ENCODE measurements at regions of chr6 and their contacts with region 1.

Region 1: DNA sequence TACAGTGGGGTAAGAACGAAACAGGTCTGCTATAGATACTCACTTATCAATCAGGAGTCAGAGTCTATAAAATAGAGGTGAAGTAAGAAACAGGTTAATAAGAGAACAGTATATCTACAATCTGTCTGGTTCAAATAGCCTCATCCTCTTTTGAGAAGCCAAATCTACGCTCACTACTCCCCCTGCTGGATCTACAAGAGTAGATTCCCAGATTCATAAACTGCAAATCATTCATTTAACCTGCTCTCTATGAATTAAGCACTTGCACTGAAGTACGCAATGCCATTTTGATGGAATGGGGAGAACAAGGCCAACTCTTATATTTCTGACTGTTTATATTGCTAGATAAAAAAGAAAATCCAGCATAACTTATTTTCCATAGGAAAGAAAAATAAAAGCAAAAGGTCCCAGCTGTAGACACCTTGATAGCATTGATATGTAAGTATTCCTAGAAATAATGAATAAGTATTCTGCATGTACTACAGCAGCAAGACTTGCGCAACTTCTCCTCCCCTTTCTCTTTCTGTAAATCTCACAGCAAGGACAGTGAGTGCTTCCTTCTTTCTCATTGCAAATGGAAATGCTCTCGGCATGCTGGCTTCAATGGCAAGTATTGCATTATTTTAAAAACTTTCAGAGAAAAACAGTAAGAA is 92.3 kb downstream of the RFX6 start:
- DNase-seq: peak in 1 of 2 donors; percentile 5
- ATAC-seq: peak in 1 of 2 donors; percentile 53
- H3K4me3 ChIP-seq: no peak overlapping the region
- H3K27ac ChIP-seq: no peak overlapping the region
- H3K4me1 ChIP-seq: peaks cover 9 to 13% of the 10 kb centered on the region in 2 donors
- H3K27me3 ChIP-seq: no peaks in the 10 kb centered on the region
- CTCF ChIP-seq: peak; percentile 35 to 72 (median 44)
- POLR2A ChIP-seq: no peak

Region 2: DNA sequence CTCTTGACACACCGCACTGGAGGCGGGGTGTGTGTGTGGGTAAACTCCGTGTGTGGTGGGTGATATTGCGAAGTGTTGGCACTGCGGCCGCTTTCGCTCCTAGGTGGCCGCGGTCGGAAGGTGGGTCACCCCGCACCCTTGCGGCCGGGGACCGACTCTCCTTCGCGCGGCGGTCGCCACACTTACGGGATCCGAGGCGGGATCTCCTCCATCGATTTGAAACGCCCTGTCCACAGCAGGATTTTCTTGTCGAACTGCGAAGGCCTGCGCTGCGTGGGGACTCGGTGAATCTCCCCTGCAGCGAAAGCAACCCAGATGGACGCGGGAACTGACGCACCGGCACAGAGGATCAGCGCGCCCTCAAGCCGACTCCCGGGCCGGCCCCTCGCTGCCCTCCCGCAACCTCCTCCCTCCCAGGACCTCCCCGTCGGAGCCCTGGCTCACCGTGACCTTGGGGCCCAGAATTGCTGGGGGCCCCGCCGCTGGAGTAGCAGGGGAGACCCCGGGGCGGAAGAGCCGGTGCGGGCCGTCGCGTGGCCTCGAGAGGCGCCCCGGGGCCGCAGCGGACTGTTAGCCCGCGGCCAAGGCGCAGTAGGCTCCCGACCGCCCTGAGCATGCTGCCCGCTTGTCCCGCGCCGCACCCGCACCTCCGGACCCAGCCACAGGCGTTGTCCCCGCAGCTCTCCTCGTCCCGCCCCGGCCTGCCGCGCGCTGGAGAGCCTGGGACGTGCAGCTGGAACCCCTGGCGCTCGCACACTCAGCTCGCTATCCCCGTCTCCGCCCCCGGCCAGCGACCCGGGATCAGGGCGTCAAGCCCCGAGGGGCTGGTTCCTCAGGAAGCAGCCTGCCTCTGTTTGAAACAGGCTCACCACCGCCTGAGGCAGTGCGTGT is 204.1 kb before region 1 on chr6 and contains the start of gene FAM162B:
- in situ Hi-C with region 1: no loop called
- intact Hi-C with region 1: no loop called
- DNase-seq: peak in 1 of 2 donors; percentile 44
- ATAC-seq: peak; percentile 40 to 55
- H3K4me3 ChIP-seq: peak within 1 kb of the TSS; percentile 57 to 65 (median 62)
- H3K27ac ChIP-seq: peak within 1 kb of the TSS; percentile 64 to 76 (median 66)
- H3K4me1 ChIP-seq: peaks cover 0 to 3% of the 10 kb centered on the region in 2 donors
- H3K27me3 ChIP-seq: peaks cover 5 to 33% (median 31%) of the 10 kb centered on the region in 3 donors
- CTCF ChIP-seq: no peak
- POLR2A ChIP-seq: no peak
- total RNA-seq, gene FAM162B: 1.8 to 8.2 (median 3.6) TPM

Region 3: DNA sequence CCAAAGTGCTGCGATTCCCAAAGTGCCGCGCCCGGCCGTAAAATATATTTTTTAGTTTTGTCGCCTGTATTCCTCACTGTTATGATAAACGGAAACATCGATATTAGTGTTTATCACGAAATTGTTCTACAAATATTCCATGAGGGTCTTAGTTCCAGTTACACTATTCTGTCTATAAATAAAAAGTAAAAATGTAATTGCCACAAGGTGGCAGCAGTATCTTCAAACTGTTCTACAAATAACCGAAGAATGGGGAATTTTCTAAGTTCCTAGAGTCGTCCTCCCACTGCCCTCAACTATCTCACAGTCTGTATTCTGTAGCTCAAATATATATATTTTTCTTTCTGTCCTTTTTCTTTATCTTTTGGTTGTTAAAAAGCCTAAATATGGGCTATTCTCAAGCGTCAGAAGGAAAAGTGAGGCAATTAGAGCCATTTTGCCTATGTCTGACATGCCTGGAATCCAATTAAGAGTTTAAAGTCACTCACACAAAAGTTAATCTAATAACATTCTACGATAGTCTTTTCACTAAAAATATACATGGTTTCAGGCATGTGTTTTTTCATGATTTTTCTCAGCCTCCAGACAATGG is 189.7 kb before region 1 on chr6:
- in situ Hi-C with region 1: no loop called
- intact Hi-C with region 1: loop called (anchors 2 kb)
- DNase-seq: no peak
- ATAC-seq: no peak
- H3K4me3 ChIP-seq: peak overlapping the region in 3 of 4 donors; percentile 4 to 15 (median 4)
- H3K27ac ChIP-seq: no peak overlapping the region
- H3K4me1 ChIP-seq: no peaks in the 10 kb centered on the region
- H3K27me3 ChIP-seq: no peaks in the 10 kb centered on the region
- CTCF ChIP-seq: peak; percentile 4 to 46 (median 30)
- POLR2A ChIP-seq: no peak

Region 4: DNA sequence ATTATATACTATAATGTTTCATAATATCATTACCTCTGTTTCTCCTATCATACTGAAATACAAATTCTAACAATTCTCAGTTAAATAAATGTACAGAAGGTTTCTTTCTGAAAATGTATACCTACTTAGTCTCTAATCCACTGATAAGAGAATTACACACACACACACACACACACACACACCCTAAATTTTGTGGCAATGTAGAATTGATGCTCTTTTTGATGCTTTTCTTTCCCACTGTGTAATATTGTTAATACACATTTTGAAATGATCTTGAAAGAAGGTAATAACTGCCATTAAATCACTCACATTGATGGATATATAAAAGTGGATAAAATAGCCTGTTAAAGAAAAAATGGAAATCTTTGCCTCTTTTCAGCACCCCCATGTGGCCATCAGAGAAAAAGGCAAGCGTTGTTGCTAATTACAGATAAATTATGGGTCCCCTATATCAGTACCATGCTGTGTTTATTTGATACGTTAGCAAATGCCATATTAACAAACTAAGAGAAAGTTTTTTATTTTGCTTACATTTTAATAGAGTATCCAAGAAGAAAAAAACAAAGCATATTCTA is 219.4 kb after region 1 on chr6:
- in situ Hi-C with region 1: loop called in 1 of 4 experiments (anchors 25 kb)
- intact Hi-C with region 1: loop called (anchors 1 kb)
- DNase-seq: no peak
- ATAC-seq: peak in 1 of 2 donors; percentile 26
- H3K4me3 ChIP-seq: no peak overlapping the region
- H3K27ac ChIP-seq: no peak overlapping the region
- H3K4me1 ChIP-seq: no peaks in the 10 kb centered on the region
- H3K27me3 ChIP-seq: no peaks in the 10 kb centered on the region
- CTCF ChIP-seq: peak in 4 of 5 experiments; percentile 49 to 58 (median 54)
- POLR2A ChIP-seq: no peak

Region 5: GRCh38 chr6:117326396-117326795 is 357.1 kb after region 1 on chr6:
- in situ Hi-C with region 1: loop called in 2 of 4 experiments (anchors 10 to 25 kb)
- intact Hi-C with region 1: no loop called
- DNase-seq: no peak
- ATAC-seq: no peak
- H3K4me3 ChIP-seq: no peak overlapping the region
- H3K27ac ChIP-seq: peak overlapping the region in 1 of 4 donors; percentile 27
- H3K4me1 ChIP-seq: peaks cover 19 to 26% of the 10 kb centered on the region in 2 donors
- H3K27me3 ChIP-seq: no peaks in the 10 kb centered on the region
- CTCF ChIP-seq: no peak
- POLR2A ChIP-seq: no peak

Region 6: DNA sequence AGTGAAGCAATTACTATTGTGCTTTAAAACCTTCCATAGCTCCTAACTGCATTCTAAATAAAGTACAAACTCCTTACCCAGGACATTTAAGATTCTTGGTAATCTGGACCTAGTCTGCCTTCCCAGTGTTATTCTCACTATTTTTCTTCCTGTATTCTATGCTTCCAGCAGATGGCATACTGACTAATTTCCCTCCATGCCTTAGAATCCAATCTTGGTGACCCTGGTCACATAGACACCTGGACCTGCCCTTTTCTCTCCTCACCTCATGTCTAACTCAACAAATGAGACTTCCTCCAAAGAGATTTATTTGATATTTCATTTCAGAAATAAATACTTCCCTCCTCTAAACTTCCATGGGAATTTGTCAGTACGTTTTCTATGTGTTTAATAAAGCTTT is 430.6 kb after region 1 on chr6:
- in situ Hi-C with region 1: no loop called
- intact Hi-C with region 1: loop called (anchors 10 kb)
- DNase-seq: no peak
- ATAC-seq: no peak
- H3K4me3 ChIP-seq: no peak overlapping the region
- H3K27ac ChIP-seq: no peak overlapping the region
- H3K4me1 ChIP-seq: peaks cover 3 to 11% of the 10 kb centered on the region in 2 donors
- H3K27me3 ChIP-seq: no peaks in the 10 kb centered on the region
- CTCF ChIP-seq: no peak
- POLR2A ChIP-seq: no peak